K562 (cell line): ENCODE measurements at regions of chr14 and their contacts with region 1.

Region 1: DNA sequence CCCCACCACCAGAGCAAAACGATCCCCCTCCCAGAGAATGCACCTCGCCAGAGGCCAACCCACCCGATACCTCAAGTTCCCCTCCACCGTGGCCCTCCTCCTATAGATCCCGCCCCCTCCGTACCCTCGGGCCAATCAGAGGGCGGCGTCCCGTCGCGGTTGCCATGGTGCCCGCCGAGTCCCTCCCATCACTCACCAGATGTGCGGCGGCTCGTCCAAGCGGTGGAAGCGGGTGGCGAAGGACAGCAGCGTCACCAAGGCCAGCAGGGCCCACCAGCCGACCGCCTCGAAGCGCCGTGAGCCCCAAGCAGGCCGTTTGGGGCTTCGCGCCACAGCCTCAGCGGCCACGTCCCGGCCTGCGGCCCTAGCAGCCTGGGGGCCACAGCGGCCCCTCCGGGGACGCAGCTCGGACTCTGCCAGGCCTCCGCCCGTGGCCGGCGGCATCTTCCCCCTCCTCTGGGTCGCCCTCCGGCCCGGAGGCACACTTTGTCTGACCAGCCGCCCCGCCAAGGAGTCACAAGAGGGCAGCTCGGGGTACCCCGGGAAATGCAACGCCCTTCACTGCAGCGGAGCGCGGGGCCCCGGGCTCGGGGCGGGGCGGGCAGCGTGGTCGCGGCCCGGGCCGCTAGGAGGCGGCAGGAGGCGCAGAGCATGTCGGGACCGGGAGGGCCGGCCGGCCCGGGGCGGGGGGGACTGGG is at the start of gene POMT2:
- DNase-seq: peak; percentile 90 to 93 (median 92)
- ATAC-seq: peak; percentile 85
- H3K4me3 ChIP-seq: peak within 1 kb of the TSS; percentile 98
- H3K27ac ChIP-seq: peak within 1 kb of the TSS; percentile 95
- H3K4me1 ChIP-seq: peaks cover 10 to 11% of the 10 kb centered on the region in 2 experiments; a peak in 4 of 5 replicates
- H3K27me3 ChIP-seq: no peaks in the 10 kb centered on the region
- CTCF ChIP-seq: peak; percentile 25 to 43 (median 31); a peak in 3 of 6 replicates
- EP300 ChIP-seq: no peak
- POLR2A ChIP-seq: peak; percentile 52; the same call in 1 of the 2 replicates
- RAD21 ChIP-seq: no peak
- polyA plus RNA-seq, gene POMT2: 0.39 to 0.74 TPM

Region 2: GRCh38 chr14:76720382-76720813 is 600.0 kb before region 1 on chr14:
- CTCF ChIA-PET with region 1: no interaction called
- POLR2A ChIA-PET with region 1: no interaction called
- in situ Hi-C with region 1: no loop called
- intact Hi-C with region 1: no loop called
- DNase-seq: peak in 3 of 4 experiments; percentile 12 to 25 (median 22)
- ATAC-seq: no peak
- H3K4me3 ChIP-seq: no peak overlapping the region
- H3K27ac ChIP-seq: no peak overlapping the region
- H3K4me1 ChIP-seq: peaks cover 0 to 5% of the 10 kb centered on the region in 2 experiments; a peak in 3 of 5 replicates
- H3K27me3 ChIP-seq: peaks cover 0 to 4% of the 10 kb centered on the region in 2 experiments; a peak in 1 of 5 replicates
- CTCF ChIP-seq: no peak
- EP300 ChIP-seq: no peak
- POLR2A ChIP-seq: no peak
- RAD21 ChIP-seq: no peak

Region 3: DNA sequence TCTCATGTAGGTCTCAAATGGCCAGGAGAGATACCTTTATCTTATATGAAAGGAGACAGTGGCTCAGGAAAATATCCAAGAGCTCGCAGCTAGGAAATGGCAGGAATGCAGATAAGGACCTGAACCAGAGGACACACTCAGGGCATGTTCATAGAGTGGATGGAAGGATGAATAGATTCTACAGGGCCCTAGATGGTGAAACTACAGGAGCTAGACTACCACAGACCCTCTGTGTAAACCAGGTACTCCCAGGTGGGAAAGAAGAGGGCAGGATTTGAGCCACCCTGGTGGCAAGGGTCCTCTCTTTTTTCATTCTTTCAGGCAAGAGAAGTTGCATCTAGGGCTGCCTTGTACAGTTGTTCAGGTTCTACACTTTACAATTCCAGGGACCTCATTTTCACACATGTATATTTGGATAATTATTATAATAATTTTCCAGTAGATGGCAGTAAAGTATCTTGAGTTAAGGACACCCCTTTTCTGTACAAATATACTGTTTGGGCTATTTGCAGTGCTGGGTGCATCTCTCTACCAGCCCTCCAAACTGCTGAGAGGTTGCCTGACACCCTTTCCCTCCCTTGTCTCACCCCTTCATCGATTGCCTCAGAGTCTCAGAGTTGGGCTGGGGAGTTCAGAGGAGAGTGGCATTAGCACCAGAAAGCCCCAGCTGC is 168.3 kb before region 1 on chr14:
- CTCF ChIA-PET with region 1: interaction called, 3 read pairs
- POLR2A ChIA-PET with region 1: interaction called, 3 read pairs
- in situ Hi-C with region 1: no loop called
- intact Hi-C with region 1: loop called (anchors 2 kb)
- DNase-seq: peak in 2 of 4 experiments; percentile 19 to 39
- ATAC-seq: peak; percentile 83
- H3K4me3 ChIP-seq: no peak overlapping the region
- H3K27ac ChIP-seq: no peak overlapping the region
- H3K4me1 ChIP-seq: no peaks in the 10 kb centered on the region; a peak in 1 of 5 replicates
- H3K27me3 ChIP-seq: peaks cover 0 to 12% of the 10 kb centered on the region in 2 experiments; a peak in 1 of 5 replicates
- CTCF ChIP-seq: peak in 2 of 3 experiments; percentile 4 to 47; a peak in 2 of 6 replicates
- EP300 ChIP-seq: no peak
- POLR2A ChIP-seq: no peak
- RAD21 ChIP-seq: peak; percentile 26 to 56; a peak in 3 of 4 replicates

Region 4: GRCh38 chr14:77177702-77178101 is 142.7 kb before region 1 on chr14:
- CTCF ChIA-PET with region 1: no interaction called
- POLR2A ChIA-PET with region 1: no interaction called
- in situ Hi-C with region 1: no loop called
- intact Hi-C with region 1: no loop called
- DNase-seq: no peak
- ATAC-seq: no peak
- H3K4me3 ChIP-seq: no peak overlapping the region
- H3K27ac ChIP-seq: no peak overlapping the region
- H3K4me1 ChIP-seq: peaks cover 0 to 13% of the 10 kb centered on the region in 2 experiments; a peak in 3 of 5 replicates
- H3K27me3 ChIP-seq: peaks cover 2 to 22% of the 10 kb centered on the region in 2 experiments; a peak in 3 of 5 replicates
- CTCF ChIP-seq: no peak
- EP300 ChIP-seq: no peak
- POLR2A ChIP-seq: no peak
- RAD21 ChIP-seq: no peak

Region 5: DNA sequence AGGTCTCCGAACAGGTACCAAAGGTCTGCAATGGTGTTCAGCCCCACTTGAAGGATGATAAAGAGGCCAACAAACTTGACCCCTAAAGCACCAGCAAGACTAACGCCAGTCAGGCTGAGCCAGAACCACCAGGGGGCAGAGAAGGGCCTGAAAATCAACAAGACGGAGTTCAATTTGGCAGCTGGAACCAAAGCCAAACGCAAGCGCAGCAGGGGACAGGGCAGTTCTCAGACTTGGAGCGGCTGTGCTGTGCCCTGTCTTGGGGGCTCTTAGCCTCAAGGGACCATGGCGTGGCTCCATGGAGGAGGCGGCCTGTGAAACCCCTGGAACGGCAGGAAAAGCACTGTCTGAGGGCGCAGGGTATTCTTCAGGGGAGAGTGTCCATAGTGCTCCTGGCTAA is 19.3 kb before region 1 on chr14:
- CTCF ChIA-PET with region 1: interaction called, 11 read pairs
- POLR2A ChIA-PET with region 1: interaction called, 10 read pairs
- in situ Hi-C with region 1: no loop called
- intact Hi-C with region 1: loop called (anchors 1 kb)
- DNase-seq: peak; percentile 43 to 78 (median 54)
- ATAC-seq: peak; percentile 92
- H3K4me3 ChIP-seq: no peak overlapping the region
- H3K27ac ChIP-seq: no peak overlapping the region
- H3K4me1 ChIP-seq: peaks cover 0 to 5% of the 10 kb centered on the region in 2 experiments; a peak in 2 of 5 replicates
- H3K27me3 ChIP-seq: no peaks in the 10 kb centered on the region
- CTCF ChIP-seq: peak; percentile 75 to 85 (median 78)
- EP300 ChIP-seq: no peak
- POLR2A ChIP-seq: no peak
- RAD21 ChIP-seq: peak; percentile 57 to 71

Region 6: DNA sequence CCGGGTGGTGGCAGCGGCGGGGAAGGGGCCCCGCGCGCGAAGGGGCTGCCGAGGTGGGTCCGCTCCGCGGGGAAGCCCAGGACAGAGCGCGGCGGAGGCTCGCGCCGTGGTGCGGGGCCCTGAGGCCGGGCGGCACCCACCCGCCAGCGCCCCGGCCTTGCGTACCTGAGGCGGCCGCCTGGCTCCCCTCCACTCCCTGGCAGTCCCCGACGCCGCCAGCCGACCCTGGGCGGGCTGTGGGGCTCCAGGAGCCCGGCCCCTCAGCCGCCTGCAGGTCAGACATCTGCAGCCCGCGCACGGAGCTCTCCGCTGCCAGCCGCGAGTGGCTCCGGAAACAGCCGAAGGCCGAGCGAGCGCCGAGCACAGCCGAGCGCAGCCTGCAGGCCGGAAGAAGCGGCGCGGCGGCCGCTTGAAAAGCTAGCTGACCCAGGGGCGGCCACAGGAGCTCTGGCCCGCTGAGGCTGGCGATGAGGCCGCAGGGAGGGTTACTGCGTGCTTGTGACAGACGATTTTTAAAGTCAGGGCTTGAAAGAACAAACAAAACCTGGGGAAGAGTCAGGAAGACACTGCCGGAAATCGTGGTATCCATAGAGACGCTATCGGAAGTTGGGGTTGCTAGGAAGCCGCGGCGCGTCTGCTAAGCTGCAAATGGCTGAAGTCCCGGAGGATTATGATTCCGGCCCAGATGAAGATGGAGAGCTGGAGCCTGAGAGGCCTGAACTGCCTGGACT is 56.5 kb after region 1 on chr14 and contains the starts of genes SAMD15 and TMED8:
- CTCF ChIA-PET with region 1: no interaction called
- POLR2A ChIA-PET with region 1: interaction called, 3 read pairs
- in situ Hi-C with region 1: no loop called
- intact Hi-C with region 1: loop called (anchors 5 kb)
- DNase-seq: peak; percentile 73 to 80 (median 78)
- ATAC-seq: peak; percentile 99
- H3K4me3 ChIP-seq: peak within 1 kb of the TSS; percentile 90
- H3K27ac ChIP-seq: peak within 1 kb of the TSS; percentile 83
- H3K4me1 ChIP-seq: peaks cover 6 to 12% of the 10 kb centered on the region in 2 experiments; a peak in 3 of 5 replicates
- H3K27me3 ChIP-seq: no peaks in the 10 kb centered on the region
- CTCF ChIP-seq: 0 out of 6 replicates have a peak, but pooled peaks have one; percentile 16
- EP300 ChIP-seq: no peak
- POLR2A ChIP-seq: peak; percentile 62
- RAD21 ChIP-seq: no peak
- polyA plus RNA-seq, gene SAMD15: 0.20 to 0.22 TPM
- polyA plus RNA-seq, gene TMED8: 3.3 to 4.7 TPM

Region 7: DNA sequence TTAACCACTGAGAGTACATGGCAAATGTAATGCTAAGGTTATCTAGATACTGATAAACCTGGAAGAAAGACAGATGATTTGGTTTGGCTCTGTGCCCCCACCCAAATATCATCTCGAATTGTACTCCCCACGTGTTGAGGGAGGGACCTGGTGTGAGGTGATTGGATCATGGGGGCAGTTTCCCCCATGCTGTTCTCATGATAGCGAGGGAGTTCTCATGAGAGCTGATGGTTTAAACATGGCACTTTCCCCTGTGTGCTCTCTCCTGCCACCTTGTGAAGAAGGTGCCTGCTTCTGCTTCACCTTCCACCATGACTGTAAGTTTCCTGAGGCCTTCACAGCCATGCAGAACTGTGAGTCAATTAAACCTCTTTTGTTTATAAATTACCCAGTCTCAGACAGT is 88.7 kb after region 1 on chr14:
- CTCF ChIA-PET with region 1: no interaction called
- POLR2A ChIA-PET with region 1: no interaction called
- in situ Hi-C with region 1: no loop called
- intact Hi-C with region 1: loop called (anchors 5 kb)
- DNase-seq: peak in 1 of 4 experiments; percentile 61
- ATAC-seq: peak; percentile 67
- H3K4me3 ChIP-seq: no peak overlapping the region
- H3K27ac ChIP-seq: no peak overlapping the region
- H3K4me1 ChIP-seq: peaks cover 12 to 37% of the 10 kb centered on the region in 2 experiments
- H3K27me3 ChIP-seq: no peaks in the 10 kb centered on the region
- CTCF ChIP-seq: peak; percentile 30 to 45 (median 39); a peak in 4 of 6 replicates
- EP300 ChIP-seq: no peak
- POLR2A ChIP-seq: no peak
- RAD21 ChIP-seq: peak; percentile 27 to 54

Region 8: DNA sequence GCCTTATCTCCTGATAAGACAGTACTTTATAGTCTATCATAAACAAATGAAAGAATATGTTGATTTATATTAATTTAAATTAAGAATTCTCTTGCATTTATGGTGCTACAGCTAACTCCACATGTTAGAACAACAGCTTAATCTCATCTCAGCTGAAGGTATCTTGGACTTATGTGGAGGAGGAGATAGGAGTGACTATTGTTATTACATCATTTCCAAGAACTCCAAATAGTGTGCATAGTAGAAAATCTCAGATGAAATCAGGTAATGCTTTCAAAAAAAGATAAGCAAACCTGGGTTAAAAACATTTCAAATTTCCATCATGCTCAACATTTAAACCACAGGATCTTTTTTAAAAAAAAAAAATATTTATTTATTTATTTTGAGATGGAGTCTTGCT is 209.6 kb after region 1 on chr14:
- CTCF ChIA-PET with region 1: no interaction called
- POLR2A ChIA-PET with region 1: no interaction called
- in situ Hi-C with region 1: no loop called
- intact Hi-C with region 1: loop called (anchors 10 kb)
- DNase-seq: no peak
- ATAC-seq: no peak
- H3K4me3 ChIP-seq: no peak overlapping the region
- H3K27ac ChIP-seq: no peak overlapping the region
- H3K4me1 ChIP-seq: no peaks in the 10 kb centered on the region; a peak in 1 of 5 replicates
- H3K27me3 ChIP-seq: no peaks in the 10 kb centered on the region
- CTCF ChIP-seq: no peak
- EP300 ChIP-seq: no peak
- POLR2A ChIP-seq: no peak
- RAD21 ChIP-seq: no peak

Region 9: GRCh38 chr14:77603654-77604255 is 283.4 kb after region 1 on chr14:
- CTCF ChIA-PET with region 1: no interaction called
- POLR2A ChIA-PET with region 1: interaction called, 4 read pairs
- in situ Hi-C with region 1: no loop called
- intact Hi-C with region 1: loop called (anchors 10 kb)
- DNase-seq: peak; percentile 19 to 58 (median 32)
- ATAC-seq: peak; percentile 26
- H3K4me3 ChIP-seq: no peak overlapping the region
- H3K27ac ChIP-seq: no peak overlapping the region
- H3K4me1 ChIP-seq: peaks cover 19 to 50% of the 10 kb centered on the region in 2 experiments
- H3K27me3 ChIP-seq: no peaks in the 10 kb centered on the region
- CTCF ChIP-seq: peak; percentile 26 to 67 (median 45); a peak in 5 of 6 replicates
- EP300 ChIP-seq: no peak
- POLR2A ChIP-seq: no peak
- RAD21 ChIP-seq: no peak